Natural killer cell (primary cell): ENCODE measurements at regions of chr13 and their contacts with region 1.

Region 1: GRCh38 chr13:23980160-23980551 is 82.9 kb upstream of the C1QTNF9B start:
- DNase-seq: peak; percentile 93 to 96
- ATAC-seq: peak; percentile 83 to 92 (median 90)
- H3K4me3 ChIP-seq: peak overlapping the region; percentile 49
- H3K4me3 Mint-ChIP-seq: peak overlapping the region; percentile 91
- H3K27ac ChIP-seq: peak overlapping the region; percentile 38
- H3K27ac Mint-ChIP-seq: peak overlapping the region; percentile 90 to 93
- H3K4me1 ChIP-seq: peaks cover 17% of the 10 kb centered on the region
- H3K4me1 Mint-ChIP-seq: peaks cover 16 to 17% of the 10 kb centered on the region in 2 donors
- H3K27me3 ChIP-seq: peaks cover 4% of the 10 kb centered on the region
- H3K27me3 Mint-ChIP-seq: peaks cover 8 to 13% of the 10 kb centered on the region in 2 donors
- CTCF ChIP-seq: no peak

Region 2: DNA sequence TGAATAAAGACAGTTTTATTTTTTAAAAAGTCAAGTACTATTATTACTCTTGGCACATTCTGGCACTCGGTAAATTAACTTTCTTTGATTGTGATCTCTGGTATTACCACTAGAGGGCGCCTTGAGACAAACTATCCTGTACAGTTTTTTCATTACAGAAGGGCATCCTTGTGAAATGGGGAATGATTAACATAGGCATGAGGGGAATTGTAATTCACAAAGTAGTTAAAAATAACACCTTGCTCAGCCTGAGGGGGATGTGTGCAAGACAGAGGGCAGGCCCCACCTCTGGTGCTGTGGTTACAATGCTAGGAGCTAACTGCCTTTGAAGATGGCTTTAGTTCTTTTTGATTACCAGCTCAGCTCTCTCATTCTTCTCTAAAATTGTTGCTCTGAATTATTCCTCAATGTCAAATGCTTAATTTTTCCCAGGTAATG is 58.7 kb before region 1 on chr13:
- intact Hi-C with region 1: loop called (anchors 1 kb)
- DNase-seq: peak in 1 of 2 donors; percentile 58
- ATAC-seq: peak; percentile 47 to 52 (median 50)
- H3K4me3 ChIP-seq: no peak overlapping the region
- H3K4me3 Mint-ChIP-seq: no peak overlapping the region
- H3K27ac ChIP-seq: no peak overlapping the region
- H3K27ac Mint-ChIP-seq: no peak overlapping the region
- H3K4me1 ChIP-seq: no peaks in the 10 kb centered on the region
- H3K4me1 Mint-ChIP-seq: no peaks in the 10 kb centered on the region
- H3K27me3 ChIP-seq: peaks cover 4% of the 10 kb centered on the region
- H3K27me3 Mint-ChIP-seq: peaks cover 17 to 57% of the 10 kb centered on the region in 2 donors
- CTCF ChIP-seq: peak; percentile 79

Region 3: DNA sequence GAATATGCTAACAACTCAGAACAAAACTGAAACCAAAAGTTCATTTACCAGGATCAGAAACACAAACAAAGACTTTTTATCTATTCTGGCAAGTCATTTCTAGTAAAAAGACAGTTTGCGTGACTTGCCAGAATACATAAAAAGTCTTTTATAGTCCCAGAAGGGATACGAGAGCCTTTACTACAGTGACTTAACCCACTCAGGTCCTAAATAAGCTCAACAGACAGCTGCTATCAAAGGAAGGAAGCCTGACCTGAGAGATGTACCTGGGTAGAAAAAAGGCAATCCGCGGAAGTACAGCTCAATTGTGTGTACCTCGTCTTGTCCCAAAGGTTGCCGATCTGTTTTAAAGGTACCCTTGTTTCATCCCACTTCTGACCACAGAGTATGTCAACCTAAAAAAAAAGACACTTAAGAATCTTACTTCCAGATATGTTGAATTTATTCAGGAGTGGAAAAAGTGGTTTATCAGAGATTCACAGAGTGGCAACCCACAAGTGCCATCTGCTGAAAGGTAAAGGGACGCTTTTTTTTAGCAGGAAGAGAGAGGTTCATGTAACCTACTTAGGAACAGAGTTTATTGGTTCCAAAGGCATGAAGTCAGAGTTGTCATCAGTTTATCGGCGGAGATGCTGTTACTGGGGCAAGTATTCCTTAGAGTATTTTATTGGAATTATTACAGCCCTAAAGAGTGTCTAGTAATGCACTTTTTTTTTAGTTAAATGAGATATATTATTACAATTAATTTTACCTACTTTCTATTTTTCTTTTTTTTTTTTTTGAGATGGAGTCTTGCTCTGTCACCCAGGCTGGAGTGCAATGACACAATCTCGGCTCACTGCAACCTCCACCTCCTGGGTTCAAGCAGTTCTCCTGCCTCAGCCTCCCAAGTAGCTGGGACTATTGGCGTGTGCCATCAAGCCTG is 13.2 kb before region 1 on chr13:
- intact Hi-C with region 1: loop called (anchors 2 kb)
- DNase-seq: peak in 1 of 2 donors; percentile 66
- ATAC-seq: peak; percentile 58 to 76 (median 75)
- H3K4me3 ChIP-seq: peak overlapping the region; percentile 51
- H3K4me3 Mint-ChIP-seq: peak overlapping the region; percentile 76
- H3K27ac ChIP-seq: peak overlapping the region; percentile 97
- H3K27ac Mint-ChIP-seq: peak overlapping the region; percentile 89 to 90
- H3K4me1 ChIP-seq: peaks cover 12% of the 10 kb centered on the region
- H3K4me1 Mint-ChIP-seq: peaks cover 16 to 21% of the 10 kb centered on the region in 2 donors
- H3K27me3 ChIP-seq: no peaks in the 10 kb centered on the region
- H3K27me3 Mint-ChIP-seq: no peaks in the 10 kb centered on the region
- CTCF ChIP-seq: no peak

Region 4: DNA sequence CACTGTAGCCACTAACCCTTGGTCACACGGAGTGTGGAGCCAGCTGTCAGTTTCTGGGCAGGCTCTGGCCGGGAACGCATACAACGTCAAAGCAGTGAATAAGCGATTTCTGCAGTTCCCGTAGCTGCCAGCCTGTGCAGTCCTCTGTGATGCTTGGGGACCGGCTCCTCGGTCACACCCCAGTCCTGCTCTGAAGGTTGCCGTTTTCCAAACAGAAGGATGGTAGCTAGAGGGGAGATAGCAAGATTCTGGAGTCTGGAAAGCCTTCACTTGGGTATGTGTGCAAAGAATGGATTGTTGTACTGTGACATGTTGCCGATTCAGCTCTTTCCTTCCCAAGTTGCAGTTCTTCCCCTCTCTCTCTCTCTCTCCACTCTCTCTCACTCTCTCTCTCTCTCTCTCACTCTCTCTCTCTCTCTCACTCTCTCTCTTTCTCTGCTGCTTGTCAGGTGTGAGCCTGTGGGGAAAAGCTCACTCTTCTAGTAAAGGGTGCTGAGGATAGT is 290.5 kb after region 1 on chr13:
- intact Hi-C with region 1: loop called (anchors 5 kb)
- DNase-seq: peak; percentile 63 to 82
- ATAC-seq: peak; percentile 15 to 56 (median 30)
- H3K4me3 ChIP-seq: peak overlapping the region; percentile 45
- H3K4me3 Mint-ChIP-seq: peak overlapping the region; percentile 94
- H3K27ac ChIP-seq: peak overlapping the region; percentile 96
- H3K27ac Mint-ChIP-seq: peak overlapping the region; percentile 95 to 98
- H3K4me1 ChIP-seq: peaks cover 81% of the 10 kb centered on the region
- H3K4me1 Mint-ChIP-seq: peaks cover 90 to 91% of the 10 kb centered on the region in 2 donors
- H3K27me3 ChIP-seq: no peaks in the 10 kb centered on the region
- H3K27me3 Mint-ChIP-seq: peaks cover 3 to 8% of the 10 kb centered on the region in 2 donors
- CTCF ChIP-seq: no peak